Vagina (tissue), 2 donors: ENCODE measurements at regions of chr2 and their contacts with region 1.

Region 1: DNA sequence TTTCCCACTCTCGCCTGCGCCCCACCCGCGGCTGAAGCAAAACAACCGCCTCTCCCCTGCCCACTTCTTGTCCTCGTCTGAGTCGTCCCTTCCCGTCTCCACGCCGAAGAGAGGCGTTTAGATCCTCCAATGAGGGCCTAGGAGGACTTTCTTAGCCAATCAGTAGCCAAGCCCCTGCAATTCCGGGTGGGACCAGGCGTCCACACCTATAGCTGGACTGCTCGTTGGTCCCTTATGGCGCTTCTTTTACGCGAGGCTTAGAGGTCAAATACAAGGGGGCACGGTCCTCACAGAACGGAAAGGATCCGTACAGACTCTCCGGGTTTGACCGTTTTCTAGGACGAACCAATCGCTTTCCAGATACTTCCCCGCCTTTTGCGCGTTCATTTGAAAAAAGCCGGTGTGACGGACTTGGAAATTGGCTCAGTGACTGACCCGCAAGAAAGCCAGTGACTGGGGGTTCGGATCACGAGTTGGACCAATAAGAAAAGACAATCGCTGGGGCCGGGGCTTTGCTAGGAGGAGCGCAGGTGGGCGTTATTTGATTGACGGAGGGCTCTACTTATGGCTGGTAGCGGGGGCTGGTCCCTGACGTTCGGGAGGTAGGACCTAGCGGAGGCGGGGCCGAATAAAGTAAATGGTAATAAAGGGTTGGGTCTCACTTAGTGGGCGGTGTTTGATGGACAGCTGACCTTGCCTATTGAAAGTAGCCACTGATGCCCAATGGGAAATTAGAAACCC is 565 bp upstream of the PPM1B start:
- DNase-seq: peak; percentile 99 to 100
- H3K4me3 ChIP-seq: peak overlapping the region; percentile 47 to 74
- H3K27ac ChIP-seq: peak overlapping the region; percentile 96
- H3K4me1 ChIP-seq: peaks cover 32% of the 10 kb centered on the region
- H3K27me3 ChIP-seq: no peaks in the 10 kb centered on the region
- CTCF ChIP-seq: no peak
- POLR2A ChIP-seq: peak in 1 of 2 donors; percentile 25

Region 2: GRCh38 chr2:44361330-44362206 is 193.5 kb after region 1 on chr2 and contains the starts of genes CAMKMT and PREPL:
- intact Hi-C with region 1: loop called (anchors 5 kb)
- DNase-seq: peak; percentile 98 to 99
- H3K4me3 ChIP-seq: peak within 1 kb of the TSS; percentile 87 to 93
- H3K27ac ChIP-seq: peak within 1 kb of the TSS; percentile 97
- H3K4me1 ChIP-seq: peaks cover 35% of the 10 kb centered on the region
- H3K27me3 ChIP-seq: no peaks in the 10 kb centered on the region
- CTCF ChIP-seq: no peak
- POLR2A ChIP-seq: peak in 1 of 2 donors; percentile 61
- total RNA-seq, gene CAMKMT: 21.1 TPM
- total RNA-seq, gene PREPL: 38.3 TPM